ENCODE measurements at regions of chr2 and their contacts with region 1.

Region 1: DNA sequence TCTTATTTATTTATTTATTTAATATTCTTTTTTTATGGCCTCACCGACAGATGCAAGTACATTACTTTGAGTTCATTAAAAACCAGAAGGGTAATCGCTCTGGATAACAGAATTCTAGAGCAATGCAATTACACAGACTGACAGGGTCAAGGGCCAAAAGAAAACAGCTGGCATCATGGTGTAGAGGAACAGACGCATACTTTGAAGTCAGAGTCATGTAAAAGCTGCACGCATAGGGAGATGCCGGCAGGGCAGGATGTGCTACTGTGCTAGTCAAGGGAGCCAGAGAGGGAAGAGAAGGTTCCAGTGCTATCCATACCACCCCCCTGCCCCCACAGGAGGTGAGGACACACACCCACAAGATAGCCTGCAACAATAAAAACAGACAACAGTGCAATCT is 115.2 kb upstream of the TFCP2L1 start:
- DNase-seq: no peak
- H3K4me3 ChIP-seq: no peak overlapping the region
- H3K27ac ChIP-seq: no peak overlapping the region
- H3K4me1 ChIP-seq: peaks cover 0 to 2% of the 10 kb centered on the region in 2 experiments; a peak in 1 of 4 replicates
- H3K27me3 ChIP-seq: no peaks in the 10 kb centered on the region
- CTCF ChIP-seq: no peak
- EP300 ChIP-seq: no peak
- RAD21 ChIP-seq: no peak

Region 2: DNA sequence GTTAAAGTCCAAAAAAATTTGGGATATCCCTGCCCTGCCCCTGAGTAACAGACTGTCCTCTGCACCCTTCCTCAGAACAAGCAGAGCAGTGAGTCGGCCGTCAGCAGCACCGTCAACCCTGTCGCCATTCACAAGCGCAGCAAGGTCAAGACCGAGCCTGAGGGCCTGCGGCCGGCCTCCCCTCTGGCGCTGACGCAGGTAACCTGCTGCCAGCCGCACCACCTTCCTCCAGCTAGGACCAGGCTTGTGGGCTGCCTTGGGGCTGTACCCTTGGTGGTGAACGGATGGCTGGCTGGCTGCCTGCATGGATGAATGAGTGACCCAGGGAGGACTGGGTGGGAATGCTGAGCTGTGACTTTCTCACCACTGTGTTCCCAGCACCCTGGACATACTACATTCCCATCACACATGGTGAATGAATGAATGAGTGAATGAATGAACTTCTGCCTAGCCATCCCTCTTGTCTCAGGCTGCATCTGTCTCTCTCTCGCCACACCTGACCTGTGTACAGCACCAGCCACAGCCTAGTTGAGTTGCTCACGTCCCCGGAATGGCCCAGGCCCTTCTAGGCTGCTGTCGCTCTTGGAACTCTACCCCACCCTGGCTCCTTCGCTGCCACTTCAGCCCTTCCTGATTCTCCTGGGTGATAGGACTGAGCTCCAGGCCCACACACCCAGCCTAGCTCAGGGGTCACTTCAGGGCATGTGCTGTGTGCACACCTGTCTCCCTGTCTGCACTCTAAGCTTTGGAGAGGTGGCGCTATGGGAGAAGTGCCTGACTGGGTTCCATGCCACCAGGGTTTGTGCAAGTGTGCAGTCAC is 428.1 kb before region 1 on chr2:
- CTCF ChIA-PET with region 1: no interaction called
- POLR2A ChIA-PET with region 1: no interaction called
- DNase-seq: no peak
- H3K4me3 ChIP-seq: no peak overlapping the region
- H3K27ac ChIP-seq: no peak overlapping the region
- H3K4me1 ChIP-seq: peaks cover 0 to 11% of the 10 kb centered on the region in 2 experiments; a peak in 1 of 4 replicates
- H3K27me3 ChIP-seq: no peaks in the 10 kb centered on the region
- CTCF ChIP-seq: no peak
- EP300 ChIP-seq: no peak
- RAD21 ChIP-seq: no peak

Region 3: GRCh38 chr2:121220995-121221394 is 179.2 kb before region 1 on chr2:
- CTCF ChIA-PET with region 1: no interaction called
- POLR2A ChIA-PET with region 1: no interaction called
- DNase-seq: no peak
- H3K4me3 ChIP-seq: no peak overlapping the region
- H3K27ac ChIP-seq: no peak overlapping the region
- H3K4me1 ChIP-seq: no peaks in the 10 kb centered on the region
- H3K27me3 ChIP-seq: no peaks in the 10 kb centered on the region; the same call in 1 of the 2 replicates
- CTCF ChIP-seq: no peak
- EP300 ChIP-seq: no peak
- RAD21 ChIP-seq: no peak

Region 4: DNA sequence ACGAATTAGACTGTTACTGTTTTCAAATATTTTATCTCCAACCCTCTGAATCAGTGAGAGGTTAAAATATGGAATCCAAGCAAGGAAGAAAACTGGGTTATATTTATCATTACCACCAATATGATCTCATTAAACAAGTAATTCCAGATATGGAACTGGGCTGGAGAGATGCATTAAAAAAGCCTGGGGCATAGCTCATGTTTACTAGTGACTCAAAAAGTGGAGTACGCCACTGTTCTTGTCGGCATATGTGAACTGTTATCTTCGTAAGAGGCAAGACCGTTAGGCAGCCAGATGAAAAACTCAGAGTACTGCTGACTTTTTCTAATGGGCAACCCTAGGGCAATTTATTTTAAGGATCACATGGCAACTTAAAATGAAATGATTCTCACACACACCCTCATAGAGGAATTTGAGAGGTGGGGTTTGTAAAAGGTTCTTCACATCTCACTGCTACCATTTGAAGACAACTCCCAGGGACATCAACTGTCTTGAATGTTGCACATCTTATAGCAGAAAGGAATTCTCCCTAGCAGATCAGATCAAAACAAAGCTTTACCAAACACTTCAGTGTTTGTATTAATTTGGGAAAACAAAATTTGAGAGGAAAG is 10.0 kb before region 1 on chr2:
- CTCF ChIA-PET with region 1: interaction called, 22 read pairs
- POLR2A ChIA-PET with region 1: no interaction called
- DNase-seq: peak; percentile 65
- H3K4me3 ChIP-seq: no peak overlapping the region
- H3K27ac ChIP-seq: peak overlapping the region in 1 of 2 experiments; percentile 18; a peak in 1 of 4 replicates
- H3K4me1 ChIP-seq: no peaks in the 10 kb centered on the region; a peak in 3 of 4 replicates
- H3K27me3 ChIP-seq: no peaks in the 10 kb centered on the region
- CTCF ChIP-seq: no peak
- EP300 ChIP-seq: peak in 1 of 2 experiments; percentile 63; a peak in 1 of 4 replicates
- RAD21 ChIP-seq: no peak

Region 5: DNA sequence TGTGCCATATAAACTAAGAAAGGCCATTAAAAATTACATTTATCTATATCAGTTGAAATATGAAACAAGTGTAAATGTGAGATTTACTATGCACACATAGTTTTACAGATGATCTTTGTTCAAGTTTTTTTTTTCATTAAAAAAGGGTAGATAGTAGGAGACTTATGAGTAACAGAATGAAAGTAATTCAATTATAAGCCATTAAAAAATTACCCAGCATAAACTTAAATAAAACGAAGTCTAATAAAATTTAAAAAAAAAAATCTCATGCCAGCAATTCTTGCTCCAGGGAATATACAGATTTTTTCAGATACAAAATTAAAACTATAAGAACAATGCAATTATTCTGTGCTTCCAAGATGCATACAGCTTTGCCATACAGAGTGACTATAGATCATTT is 12.1 kb after region 1 on chr2:
- CTCF ChIA-PET with region 1: interaction called, 23 read pairs
- POLR2A ChIA-PET with region 1: no interaction called
- DNase-seq: no peak
- H3K4me3 ChIP-seq: no peak overlapping the region
- H3K27ac ChIP-seq: no peak overlapping the region
- H3K4me1 ChIP-seq: peaks cover 0 to 5% of the 10 kb centered on the region in 2 experiments; a peak in 2 of 4 replicates
- H3K27me3 ChIP-seq: no peaks in the 10 kb centered on the region
- CTCF ChIP-seq: no peak
- EP300 ChIP-seq: no peak
- RAD21 ChIP-seq: no peak

Region 6: GRCh38 chr2:121427187-121427689 is 27.0 kb after region 1 on chr2:
- CTCF ChIA-PET with region 1: interaction called, 12 read pairs
- POLR2A ChIA-PET with region 1: no interaction called
- DNase-seq: no peak
- H3K4me3 ChIP-seq: no peak overlapping the region
- H3K27ac ChIP-seq: no peak overlapping the region
- H3K4me1 ChIP-seq: peaks cover 0 to 5% of the 10 kb centered on the region in 2 experiments; a peak in 2 of 4 replicates
- H3K27me3 ChIP-seq: no peaks in the 10 kb centered on the region
- CTCF ChIP-seq: no peak
- EP300 ChIP-seq: no peak
- RAD21 ChIP-seq: no peak

Region 7: GRCh38 chr2:121617042-121617599 is 216.9 kb after region 1 on chr2:
- CTCF ChIA-PET with region 1: no interaction called
- POLR2A ChIA-PET with region 1: no interaction called
- DNase-seq: no peak
- H3K4me3 ChIP-seq: no peak overlapping the region
- H3K27ac ChIP-seq: no peak overlapping the region
- H3K4me1 ChIP-seq: peaks cover 0 to 2% of the 10 kb centered on the region in 2 experiments; a peak in 1 of 4 replicates
- H3K27me3 ChIP-seq: no peaks in the 10 kb centered on the region
- CTCF ChIP-seq: no peak
- EP300 ChIP-seq: no peak
- RAD21 ChIP-seq: no peak